Activated naive CD4-positive, alpha-beta T cell treated with anti-CD3 and anti-CD28 coated beads for 36 hours (primary cell): ENCODE measurements at regions of chr6 and their contacts with region 1.

Region 1: DNA sequence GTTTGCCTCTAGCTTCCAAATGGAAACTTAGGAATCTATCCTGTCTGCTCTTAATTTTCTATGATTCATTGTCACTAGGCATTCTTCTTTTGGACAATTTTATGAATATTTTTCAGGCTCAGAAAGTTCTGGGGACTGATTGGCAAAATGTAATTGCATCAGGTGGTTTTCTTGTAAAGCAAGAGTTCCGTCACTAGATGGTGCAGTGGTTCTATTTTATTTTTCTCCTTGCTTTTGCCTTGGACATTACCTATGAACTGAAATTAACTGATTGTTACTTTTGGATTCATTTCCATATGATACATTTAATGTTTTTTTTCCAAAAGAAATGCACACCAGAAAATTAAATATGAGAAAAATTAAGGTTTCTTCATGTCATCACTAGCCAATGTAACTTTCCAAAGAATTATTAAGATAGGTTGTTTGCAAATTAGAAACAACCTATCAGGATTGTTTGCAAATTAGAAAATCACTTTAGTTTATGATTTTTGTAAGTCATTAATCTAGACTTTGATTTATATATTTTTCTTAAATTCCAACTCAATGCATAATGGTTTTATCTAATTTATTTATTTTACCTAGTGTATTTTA is 48.0 kb downstream of the TMEM170B start:
- DNase-seq: peak; percentile 14
- H3K4me3 Mint-ChIP-seq: no peak overlapping the region
- H3K27ac Mint-ChIP-seq: no peak overlapping the region
- H3K4me1 Mint-ChIP-seq: no peaks in the 10 kb centered on the region
- H3K27me3 Mint-ChIP-seq: no peaks in the 10 kb centered on the region

Region 2: GRCh38 chr6:11575408-11576033 is 10.0 kb before region 1 on chr6:
- CTCF ChIA-PET with region 1: interaction called, 14 read pairs
- intact Hi-C with region 1: no loop called
- DNase-seq: peak; percentile 75
- H3K4me3 Mint-ChIP-seq: no peak overlapping the region
- H3K27ac Mint-ChIP-seq: no peak overlapping the region
- H3K4me1 Mint-ChIP-seq: no peaks in the 10 kb centered on the region
- H3K27me3 Mint-ChIP-seq: no peaks in the 10 kb centered on the region

Region 3: DNA sequence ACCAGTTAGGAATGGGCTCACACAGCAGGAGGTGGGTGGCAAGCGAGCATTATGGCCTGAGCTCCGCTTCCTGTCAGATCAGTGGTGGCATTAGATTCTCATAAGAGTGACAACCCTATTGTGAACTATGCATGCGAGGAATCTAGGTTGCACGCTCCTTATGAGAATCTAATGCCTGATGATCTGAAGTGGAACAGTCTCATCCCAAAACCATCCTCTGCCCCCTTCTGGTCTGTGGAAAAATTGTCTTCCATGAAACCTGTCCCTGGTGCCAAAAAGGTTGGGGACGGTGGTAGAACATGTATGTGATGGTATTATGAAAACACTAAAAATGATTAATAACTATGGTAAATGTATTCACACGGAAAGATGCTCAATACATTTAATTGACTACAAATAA is 326.9 kb after region 1 on chr6:
- CTCF ChIA-PET with region 1: no interaction called
- intact Hi-C with region 1: loop called (anchors 5 kb)
- DNase-seq: peak; percentile 35
- H3K4me3 Mint-ChIP-seq: no peak overlapping the region
- H3K27ac Mint-ChIP-seq: no peak overlapping the region
- H3K4me1 Mint-ChIP-seq: peaks cover 2% of the 10 kb centered on the region
- H3K27me3 Mint-ChIP-seq: no peaks in the 10 kb centered on the region

Region 4: GRCh38 chr6:12890171-12890790 is 1304.8 kb after region 1 on chr6:
- CTCF ChIA-PET with region 1: no interaction called
- intact Hi-C with region 1: loop called (anchors 1 kb)
- DNase-seq: peak; percentile 31
- H3K4me3 Mint-ChIP-seq: no peak overlapping the region
- H3K27ac Mint-ChIP-seq: no peak overlapping the region
- H3K4me1 Mint-ChIP-seq: no peaks in the 10 kb centered on the region
- H3K27me3 Mint-ChIP-seq: peaks cover 15% of the 10 kb centered on the region